ENCODE measurements at regions of chr9 and their contacts with region 1.

Region 1: GRCh38 chr9:38641985-38642864 is 21.8 kb upstream of the ANKRD18A start:
- DNase-seq: no peak
- ATAC-seq: peak; percentile 72 to 92 (median 88)
- H3K4me3 ChIP-seq: no peak overlapping the region
- H3K27ac ChIP-seq: no peak overlapping the region
- H3K4me1 ChIP-seq: no peaks in the 10 kb centered on the region
- H3K27me3 ChIP-seq: peaks cover 0 to 23% (median 0%) of the 10 kb centered on the region in 7 donors
- CTCF ChIP-seq: peak in 8 of 9 donors; percentile 11 to 57 (median 46)

Region 2: DNA sequence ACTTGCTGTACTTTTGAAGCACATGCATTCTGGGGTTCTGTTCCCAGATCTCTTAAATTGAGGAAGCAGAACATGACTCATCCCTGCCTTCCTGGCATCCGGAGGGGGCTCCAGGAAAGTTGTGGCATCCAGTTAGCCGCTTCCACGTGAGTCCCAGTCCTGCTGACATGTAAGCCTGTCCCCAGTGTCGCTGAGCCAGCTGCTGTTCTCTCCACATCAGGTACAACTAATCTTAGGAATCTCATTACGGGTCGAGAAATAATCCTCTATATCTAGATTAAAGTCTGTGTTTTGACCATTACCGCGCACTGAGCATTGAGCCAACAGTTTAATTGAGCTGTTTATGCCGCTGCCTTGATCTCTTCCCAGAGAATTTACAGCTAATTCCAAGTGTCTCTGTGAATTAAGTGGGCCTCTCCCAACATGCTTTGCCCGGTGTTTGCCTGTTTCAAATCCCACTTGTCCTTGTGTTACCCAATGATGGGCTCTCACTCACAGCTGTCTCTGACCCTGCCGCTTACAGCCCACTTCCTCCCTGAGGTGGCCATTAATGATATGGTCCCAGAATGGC is 562.7 kb before region 1 on chr9:
- intact Hi-C with region 1: no loop called
- DNase-seq: no peak
- ATAC-seq: peak in 3 of 8 donors; percentile 39 to 50 (median 40)
- H3K4me3 ChIP-seq: no peak overlapping the region
- H3K27ac ChIP-seq: peak overlapping the region in 1 of 10 donors; percentile 65
- H3K4me1 ChIP-seq: peaks cover 0 to 49% (median 10%) of the 10 kb centered on the region in 9 donors
- H3K27me3 ChIP-seq: no peaks in the 10 kb centered on the region
- CTCF ChIP-seq: no peak

Region 3: GRCh38 chr9:38687387-38687842 is 45.2 kb after region 1 on chr9:
- intact Hi-C with region 1: loop called in 1 of 10 experiments (anchors 10 kb)
- DNase-seq: peak in 1 of 2 donors; percentile 68
- ATAC-seq: peak; percentile 56 to 89 (median 78)
- H3K4me3 ChIP-seq: peak overlapping the region in 8 of 10 donors; percentile 6 to 33 (median 26)
- H3K27ac ChIP-seq: peak overlapping the region in 2 of 10 donors; percentile 10 to 19
- H3K4me1 ChIP-seq: peaks cover 0 to 22% (median 8%) of the 10 kb centered on the region in 9 donors
- H3K27me3 ChIP-seq: no peaks in the 10 kb centered on the region
- CTCF ChIP-seq: no peak

Region 4: GRCh38 chr9:38707885-38708637 is 65.8 kb after region 1 on chr9:
- intact Hi-C with region 1: loop called in 2 of 10 experiments (anchors 10 kb)
- DNase-seq: no peak
- ATAC-seq: no peak
- H3K4me3 ChIP-seq: no peak overlapping the region
- H3K27ac ChIP-seq: no peak overlapping the region
- H3K4me1 ChIP-seq: peaks cover 0 to 3% (median 0%) of the 10 kb centered on the region in 9 donors
- H3K27me3 ChIP-seq: peaks cover 0 to 6% (median 0%) of the 10 kb centered on the region in 7 donors
- CTCF ChIP-seq: peak in 1 of 9 donors; percentile 26